K562 (cell line): ENCODE measurements at regions of chr3 and their contacts with region 1.

Region 1: DNA sequence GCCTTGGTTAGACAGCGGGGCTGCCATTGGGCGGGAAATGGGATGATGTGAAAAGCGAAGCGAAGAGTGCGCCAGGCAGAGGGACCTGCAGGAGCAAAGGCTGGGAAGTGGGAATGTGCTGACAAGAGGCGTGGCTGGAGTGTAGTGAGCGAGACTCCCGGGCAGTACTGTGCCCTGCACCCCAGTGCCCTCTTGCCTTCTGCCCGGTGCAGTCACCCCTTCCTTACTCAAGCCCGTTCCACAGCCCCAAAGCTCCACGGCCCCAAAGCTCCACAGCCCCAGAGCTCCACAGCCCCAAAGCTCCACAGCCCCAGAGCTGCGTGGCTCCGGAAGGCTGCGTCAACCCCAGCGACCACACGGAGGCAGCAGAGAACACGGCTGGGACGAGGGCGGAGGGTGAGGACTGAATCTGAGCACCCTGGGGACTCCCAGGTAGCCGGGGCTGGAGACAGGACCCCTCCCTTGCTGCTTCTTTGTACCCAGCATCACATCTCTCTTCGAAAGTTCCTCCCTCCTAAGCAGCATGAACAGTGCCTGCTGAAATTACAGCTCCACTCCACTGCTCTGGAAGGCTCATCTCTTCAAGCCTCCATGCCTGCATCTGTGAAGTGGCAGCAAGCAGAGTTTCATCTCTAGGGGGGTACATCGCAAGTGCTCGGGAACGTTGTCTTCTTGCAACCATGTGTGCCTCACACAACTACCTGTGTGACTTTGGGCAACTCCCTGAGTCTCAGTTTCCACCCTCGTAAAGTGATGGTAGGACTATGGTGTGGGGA is 108.9 kb downstream of the FBLN2 start:
- DNase-seq: peak; percentile 79 to 89 (median 88)
- ATAC-seq: peak; percentile 89
- H3K4me3 ChIP-seq: no peak overlapping the region
- H3K27ac ChIP-seq: no peak overlapping the region
- H3K4me1 ChIP-seq: peaks cover 0 to 25% of the 10 kb centered on the region in 2 experiments; a peak in 3 of 5 replicates
- H3K27me3 ChIP-seq: peaks cover 2 to 56% of the 10 kb centered on the region in 2 experiments; a peak in 4 of 5 replicates
- CTCF ChIP-seq: peak; percentile 94 to 96 (median 95)
- EP300 ChIP-seq: no peak
- POLR2A ChIP-seq: no peak
- RAD21 ChIP-seq: peak; percentile 79 to 94

Region 2: GRCh38 chr3:13770170-13771169 is 112.6 kb after region 1 on chr3:
- CTCF ChIA-PET with region 1: no interaction called
- POLR2A ChIA-PET with region 1: no interaction called
- in situ Hi-C with region 1: no loop called
- intact Hi-C with region 1: no loop called
- DNase-seq: no peak
- ATAC-seq: peak; percentile 36
- H3K4me3 ChIP-seq: no peak overlapping the region
- H3K27ac ChIP-seq: no peak overlapping the region
- H3K4me1 ChIP-seq: no peaks in the 10 kb centered on the region
- H3K27me3 ChIP-seq: peaks cover 4 to 66% of the 10 kb centered on the region in 2 experiments; a peak in 4 of 5 replicates
- CTCF ChIP-seq: no peak
- EP300 ChIP-seq: no peak
- POLR2A ChIP-seq: no peak
- RAD21 ChIP-seq: no peak

Region 3: GRCh38 chr3:13884851-13885703 is 227.2 kb after region 1 on chr3:
- CTCF ChIA-PET with region 1: interaction called, 14 read pairs
- POLR2A ChIA-PET with region 1: interaction called, 3 read pairs
- in situ Hi-C with region 1: loop called (anchors 5 kb)
- intact Hi-C with region 1: loop called (anchors 1 kb)
- DNase-seq: peak; percentile 70 to 82 (median 80)
- ATAC-seq: peak; percentile 90
- H3K4me3 ChIP-seq: no peak overlapping the region
- H3K27ac ChIP-seq: no peak overlapping the region
- H3K4me1 ChIP-seq: peaks cover 4 to 9% of the 10 kb centered on the region in 2 experiments
- H3K27me3 ChIP-seq: peaks cover 11 to 32% of the 10 kb centered on the region in 2 experiments; a peak in 4 of 5 replicates
- CTCF ChIP-seq: peak; percentile 86 to 96 (median 89)
- EP300 ChIP-seq: no peak
- POLR2A ChIP-seq: no peak
- RAD21 ChIP-seq: peak; percentile 53 to 87

Region 4: DNA sequence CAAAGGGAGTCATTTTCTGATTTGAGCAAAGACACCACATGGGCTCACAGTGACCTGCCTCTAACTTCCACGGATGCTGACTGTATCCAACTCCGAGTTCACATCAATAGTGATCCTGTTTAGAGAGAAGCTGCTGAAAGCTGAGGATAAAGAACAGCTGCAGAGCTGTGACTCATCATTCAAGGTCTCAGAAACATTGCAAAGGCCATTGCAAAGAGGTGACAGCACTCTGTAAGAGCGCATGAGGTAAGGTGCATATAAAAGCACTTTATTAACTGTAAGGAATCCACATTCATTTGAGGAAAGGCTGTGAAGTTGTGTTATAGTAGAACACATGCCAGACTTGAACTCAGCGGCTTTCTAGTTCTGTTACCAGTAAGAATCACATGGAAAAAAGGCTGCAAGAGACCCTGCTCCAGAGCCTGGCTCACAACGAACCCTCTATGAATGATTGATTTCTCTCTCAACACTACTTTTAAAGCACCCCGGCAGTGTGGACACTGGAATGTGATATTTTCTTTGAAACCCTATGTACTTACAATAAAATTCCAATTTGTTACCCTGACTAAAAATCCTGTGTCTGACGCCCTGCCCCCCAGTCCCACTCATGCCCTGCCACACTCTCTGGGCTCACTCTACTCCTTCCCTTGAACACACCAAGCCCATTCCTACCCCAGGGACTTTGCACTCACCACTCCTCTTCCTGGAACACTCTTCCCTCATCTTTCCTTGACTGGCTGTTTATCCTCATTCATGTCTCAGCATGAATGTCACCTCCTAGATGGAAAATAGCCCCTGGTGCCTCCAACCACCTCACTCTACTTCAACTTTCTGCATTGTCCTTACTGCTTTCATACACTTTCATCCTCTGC is 632.0 kb after region 1 on chr3:
- CTCF ChIA-PET with region 1: no interaction called
- POLR2A ChIA-PET with region 1: no interaction called
- in situ Hi-C with region 1: no loop called
- intact Hi-C with region 1: no loop called
- DNase-seq: peak; percentile 43 to 72 (median 56)
- ATAC-seq: peak; percentile 90
- H3K4me3 ChIP-seq: no peak overlapping the region
- H3K27ac ChIP-seq: peak overlapping the region; percentile 16; the same call in 1 of the 3 replicates
- H3K4me1 ChIP-seq: peaks cover 6 to 23% of the 10 kb centered on the region in 2 experiments; a peak in 3 of 5 replicates
- H3K27me3 ChIP-seq: no peaks in the 10 kb centered on the region
- CTCF ChIP-seq: no peak
- EP300 ChIP-seq: peak; percentile 40; the same call in 1 of the 2 replicates
- POLR2A ChIP-seq: no peak
- RAD21 ChIP-seq: no peak

Region 5: GRCh38 chr3:15553749-15554148 is 1895.9 kb after region 1 on chr3:
- CTCF ChIA-PET with region 1: no interaction called
- POLR2A ChIA-PET with region 1: no interaction called
- in situ Hi-C with region 1: no loop called
- intact Hi-C with region 1: no loop called
- DNase-seq: no peak
- ATAC-seq: no peak
- H3K4me3 ChIP-seq: no peak overlapping the region
- H3K27ac ChIP-seq: no peak overlapping the region
- H3K4me1 ChIP-seq: peaks cover 0 to 8% of the 10 kb centered on the region in 2 experiments; a peak in 2 of 5 replicates
- H3K27me3 ChIP-seq: no peaks in the 10 kb centered on the region
- CTCF ChIP-seq: no peak
- EP300 ChIP-seq: no peak
- POLR2A ChIP-seq: no peak
- RAD21 ChIP-seq: no peak